ENCODE measurements at regions of chr10 and their contacts with region 1.

Region 1: GRCh38 chr10:114403541-114404161 is 651 bp downstream of the AFAP1L2 start:
- DNase-seq: no peak
- ATAC-seq: no peak
- H3K4me3 ChIP-seq: peak overlapping the region; percentile 55 to 64 (median 60)
- H3K27ac ChIP-seq: peak overlapping the region; percentile 41 to 63 (median 50)
- H3K4me1 ChIP-seq: peaks cover 19 to 22% of the 10 kb centered on the region in 2 donors
- H3K27me3 ChIP-seq: peaks cover 36 to 39% (median 38%) of the 10 kb centered on the region in 3 donors
- CTCF ChIP-seq: peak in 2 of 5 experiments; percentile 12 to 16
- POLR2A ChIP-seq: no peak

Region 2: DNA sequence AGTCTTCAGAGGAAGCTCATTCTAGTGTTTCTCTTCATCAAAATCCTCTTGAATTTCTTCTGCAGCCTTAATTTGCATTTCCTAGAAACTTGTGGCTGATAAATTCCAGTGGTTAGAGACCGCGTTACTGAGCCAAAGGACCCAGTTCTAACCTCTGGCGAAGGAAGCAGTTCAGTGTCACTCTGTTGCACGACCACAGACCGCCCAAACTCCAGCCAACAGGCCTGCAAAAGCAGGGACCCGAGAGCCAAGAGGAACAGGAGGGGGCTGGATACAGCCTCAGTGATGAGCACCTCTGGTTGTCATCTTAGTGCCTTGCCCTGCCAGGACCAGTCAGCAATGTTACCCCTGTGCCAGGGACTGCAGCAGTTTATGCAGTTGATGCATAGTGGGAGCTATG is 69.3 kb before region 1 on chr10:
- in situ Hi-C with region 1: no loop called
- intact Hi-C with region 1: loop called (anchors 5 kb)
- DNase-seq: no peak
- ATAC-seq: no peak
- H3K4me3 ChIP-seq: no peak overlapping the region
- H3K27ac ChIP-seq: no peak overlapping the region
- H3K4me1 ChIP-seq: peaks cover 24 to 27% of the 10 kb centered on the region in 2 donors
- H3K27me3 ChIP-seq: no peaks in the 10 kb centered on the region
- CTCF ChIP-seq: no peak
- POLR2A ChIP-seq: no peak